PC-9 (cell line): ENCODE measurements at regions of chr20 and their contacts with region 1.

Region 1: GRCh38 chr20:56636716-56637115 is 7.6 kb downstream of the TFAP2C start:
- DNase-seq: no peak
- H3K4me3 ChIP-seq: no peak overlapping the region
- H3K27ac ChIP-seq: no peak overlapping the region
- H3K4me1 ChIP-seq: peaks cover 19% of the 10 kb centered on the region
- H3K27me3 ChIP-seq: no peaks in the 10 kb centered on the region
- CTCF ChIP-seq: no peak

Region 2: DNA sequence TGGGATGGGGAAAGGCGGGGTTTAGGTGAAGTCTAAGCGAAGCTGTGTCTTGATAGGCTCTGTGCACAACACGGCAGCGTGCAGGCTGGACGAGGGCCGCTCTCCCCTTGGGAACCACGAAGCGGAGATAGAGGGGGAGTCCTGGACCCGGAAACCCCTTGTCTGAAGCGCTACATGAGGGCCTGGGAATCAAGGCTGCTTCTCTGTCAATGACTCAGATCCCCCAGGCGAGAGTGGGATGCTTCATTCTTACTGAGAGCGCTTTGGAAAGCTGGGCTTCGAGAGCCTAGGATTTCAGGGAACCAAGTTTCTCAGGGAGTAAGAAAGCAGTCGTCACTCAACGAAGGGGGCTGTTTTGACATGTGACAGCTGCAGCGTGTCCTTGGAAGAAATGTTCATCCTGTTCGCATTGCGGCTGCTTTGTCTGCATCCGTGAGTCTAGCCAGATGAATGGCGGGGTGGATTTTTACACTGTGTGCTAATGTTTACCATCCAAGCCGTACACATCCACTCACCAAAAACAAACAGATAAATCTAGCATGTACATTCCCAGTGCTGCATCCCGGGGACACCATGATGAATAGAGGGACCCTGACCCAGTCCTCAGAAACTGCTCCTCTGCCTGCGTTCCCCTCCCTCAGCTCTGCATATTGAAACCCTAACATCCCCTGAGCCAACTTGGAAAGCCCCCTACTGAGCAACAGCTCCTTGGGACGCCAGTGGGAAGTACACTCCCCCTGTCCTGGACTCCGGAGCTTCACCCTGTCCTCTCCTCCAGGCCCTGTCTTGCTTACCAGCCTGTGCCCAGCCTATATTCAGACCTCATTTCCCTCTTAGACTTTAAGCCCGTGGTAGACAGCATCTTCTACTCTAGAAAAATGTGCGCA is 192.8 kb before region 1 on chr20:
- CTCF ChIA-PET with region 1: no interaction called
- POLR2A ChIA-PET with region 1: no interaction called
- intact Hi-C with region 1: no loop called
- DNase-seq: peak in 1 of 2 experiments; percentile 31
- H3K4me3 ChIP-seq: no peak overlapping the region
- H3K27ac ChIP-seq: no peak overlapping the region
- H3K4me1 ChIP-seq: no peaks in the 10 kb centered on the region; the same call in 1 of the 2 replicates
- H3K27me3 ChIP-seq: peaks cover 13% of the 10 kb centered on the region; the same call in 1 of the 2 replicates
- CTCF ChIP-seq: no peak

Region 3: DNA sequence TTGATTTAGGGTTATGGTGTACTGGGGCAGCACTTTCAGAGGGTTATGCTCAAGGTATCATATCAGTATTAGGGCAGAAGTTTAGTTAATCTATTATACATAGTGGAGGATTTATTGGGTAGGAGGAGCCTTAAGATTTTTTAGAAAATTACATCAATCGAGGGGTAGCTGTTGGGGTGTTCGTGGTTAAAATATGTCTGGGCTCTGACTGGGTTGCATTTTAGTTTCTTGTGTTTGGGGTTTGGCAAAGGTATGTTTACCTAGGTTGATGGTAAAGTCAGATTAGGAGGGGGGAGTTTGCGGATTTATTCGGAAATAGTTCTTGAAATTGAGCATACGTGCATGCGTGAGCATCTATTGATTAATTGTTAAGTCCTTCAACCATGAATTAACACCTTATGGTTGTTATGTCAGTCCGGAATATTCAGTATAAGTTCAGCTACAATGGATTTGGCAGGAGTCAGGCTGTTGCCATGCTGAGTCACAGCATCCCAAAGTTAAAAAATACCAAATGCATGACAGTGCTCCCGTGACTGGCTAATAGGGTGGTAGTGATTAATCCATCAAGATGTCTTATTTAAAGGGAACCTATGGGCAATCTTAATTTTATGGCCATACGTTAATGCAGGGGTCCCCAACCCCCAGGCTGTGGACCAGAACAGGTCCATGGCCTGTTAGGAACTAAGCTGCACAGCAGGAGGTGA is 724.6 kb after region 1 on chr20:
- CTCF ChIA-PET with region 1: no interaction called
- POLR2A ChIA-PET with region 1: interaction called, 11 read pairs
- intact Hi-C with region 1: no loop called
- DNase-seq: no peak
- H3K4me3 ChIP-seq: no peak overlapping the region
- H3K27ac ChIP-seq: no peak overlapping the region
- H3K4me1 ChIP-seq: peaks cover 5% of the 10 kb centered on the region; the same call in 1 of the 2 replicates
- H3K27me3 ChIP-seq: no peaks in the 10 kb centered on the region
- CTCF ChIP-seq: no peak